AG04450 (cell line): ENCODE measurements at regions of chr20 and their contacts with region 1.

Region 1: DNA sequence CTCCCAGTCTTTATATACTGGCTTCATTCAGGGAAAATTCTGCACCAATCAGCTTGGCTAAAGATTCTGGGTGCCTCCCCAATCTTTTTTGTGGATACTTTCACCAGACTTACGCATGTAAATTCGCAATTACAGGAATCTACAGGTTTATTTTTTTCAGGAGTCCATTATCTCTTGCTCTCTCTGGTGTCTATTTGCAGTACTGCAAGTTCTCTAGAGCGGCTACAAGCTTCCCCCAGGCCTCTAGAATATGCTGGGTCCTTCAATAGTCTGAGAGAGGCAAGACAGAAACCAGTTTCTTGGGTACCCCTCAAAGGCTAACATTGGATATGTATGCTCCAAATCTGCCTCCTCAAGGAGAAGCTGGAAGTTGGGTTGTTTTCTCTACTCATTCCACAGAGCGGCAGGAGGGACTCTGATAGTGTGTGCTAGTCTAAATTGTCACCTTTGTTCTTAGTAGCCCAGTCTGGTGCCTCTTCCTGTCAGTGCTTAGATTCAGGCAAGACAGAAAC is 58.5 kb downstream of the SUN5 start:
- DNase-seq: peak; percentile 3
- H3K4me3 ChIP-seq: no peak overlapping the region
- H3K27ac ChIP-seq: no peak overlapping the region
- H3K27me3 ChIP-seq: peaks cover 14% of the 10 kb centered on the region
- CTCF ChIP-seq: peak; percentile 72

Region 2: DNA sequence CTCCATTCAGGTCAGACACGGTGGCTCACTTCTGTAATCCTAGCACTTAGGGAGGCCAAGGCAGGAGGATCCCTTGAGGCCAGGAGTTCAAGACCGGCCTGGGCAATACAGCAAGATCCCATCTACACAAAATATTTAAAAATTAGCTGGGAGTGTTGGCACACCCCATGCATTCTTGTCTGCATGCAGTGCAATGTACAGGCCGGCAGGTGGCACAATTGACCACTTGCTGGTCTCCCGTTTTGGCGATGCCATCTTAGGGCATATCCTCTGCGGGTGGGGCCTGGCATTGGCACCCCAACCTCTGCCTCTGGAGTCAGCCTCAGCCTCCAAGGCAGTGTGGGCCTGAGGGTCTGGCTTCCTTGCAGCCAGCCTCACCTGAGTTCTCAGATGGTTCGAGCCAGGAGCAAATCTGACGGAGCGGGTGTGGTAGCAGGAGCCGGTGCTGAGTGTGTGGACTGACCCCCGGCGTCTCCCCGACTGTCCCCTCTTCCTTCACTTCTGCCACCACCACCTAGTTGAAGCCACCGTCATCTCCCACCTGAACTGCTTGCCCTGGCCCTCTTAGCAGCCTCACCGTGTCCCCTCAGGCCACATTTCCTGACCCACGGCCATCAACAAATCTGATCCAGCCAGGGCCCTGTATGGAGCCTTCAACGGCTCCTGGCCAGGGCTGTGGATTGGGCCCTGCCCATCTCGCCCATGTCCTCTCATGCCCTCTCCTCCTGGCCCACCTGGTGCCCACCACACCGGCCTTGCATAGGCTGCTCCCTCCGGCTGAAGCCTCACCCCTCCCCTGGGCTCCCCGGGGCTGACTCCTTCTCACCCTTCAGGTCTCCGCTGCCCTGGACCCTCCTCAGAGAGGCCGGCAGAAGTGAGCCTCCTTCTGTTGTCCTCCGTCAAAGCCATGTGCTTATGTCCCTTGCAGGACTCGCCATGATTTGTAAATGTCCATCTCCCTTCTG is 43.0 kb before region 1 on chr20:
- CTCF ChIA-PET with region 1: interaction called, 38 read pairs
- POLR2A ChIA-PET with region 1: no interaction called
- DNase-seq: no peak
- H3K4me3 ChIP-seq: no peak overlapping the region
- H3K27ac ChIP-seq: no peak overlapping the region
- H3K27me3 ChIP-seq: peaks cover 2% of the 10 kb centered on the region
- CTCF ChIP-seq: peak; percentile 92

Region 3: DNA sequence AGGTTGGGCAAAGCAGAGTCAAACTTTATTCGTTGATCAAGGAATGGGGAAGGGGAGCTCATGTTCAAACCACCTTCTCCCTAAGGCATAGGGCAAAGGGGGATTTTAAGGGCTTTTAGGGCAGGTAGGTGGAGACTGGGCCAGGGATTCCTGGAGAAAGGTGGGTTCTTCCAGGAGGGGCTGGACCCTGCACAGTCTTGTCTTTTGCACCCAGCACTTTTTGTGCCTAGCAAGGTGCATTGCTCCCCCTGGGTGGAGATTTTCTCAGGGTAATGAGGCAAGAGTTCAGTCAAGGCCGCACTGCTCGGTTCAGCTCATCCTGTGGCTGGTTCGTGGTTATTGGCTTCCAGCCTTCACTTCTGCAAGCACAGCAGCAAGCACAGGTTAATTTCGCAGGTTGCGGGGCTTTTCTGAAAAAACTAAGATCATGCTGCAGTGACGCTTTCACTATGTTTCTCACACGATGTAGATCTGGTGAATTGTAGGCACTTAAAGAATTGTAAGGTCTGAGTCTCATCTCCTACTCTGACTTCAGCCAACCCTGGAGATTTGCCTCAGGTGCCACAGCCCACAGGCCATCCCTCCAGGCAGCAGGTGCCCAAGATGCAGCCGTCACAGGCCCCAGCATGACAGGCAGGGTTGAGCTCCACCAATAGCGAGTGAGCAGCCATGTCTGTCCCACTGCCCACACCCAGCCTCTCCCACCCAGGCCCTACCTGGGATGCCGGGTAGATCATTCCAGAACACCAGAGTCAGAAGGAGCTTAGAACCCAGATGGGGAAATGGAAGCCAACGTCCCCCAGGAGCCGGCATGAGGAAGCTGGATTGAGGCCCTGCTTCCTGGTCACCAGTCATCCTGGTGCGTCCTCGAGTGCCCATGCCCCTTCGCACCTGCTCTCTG is 21.4 kb after region 1 on chr20:
- CTCF ChIA-PET with region 1: no interaction called
- POLR2A ChIA-PET with region 1: no interaction called
- DNase-seq: no peak
- H3K4me3 ChIP-seq: no peak overlapping the region
- H3K27ac ChIP-seq: no peak overlapping the region
- H3K27me3 ChIP-seq: peaks cover 17% of the 10 kb centered on the region
- CTCF ChIP-seq: no peak

Region 4: DNA sequence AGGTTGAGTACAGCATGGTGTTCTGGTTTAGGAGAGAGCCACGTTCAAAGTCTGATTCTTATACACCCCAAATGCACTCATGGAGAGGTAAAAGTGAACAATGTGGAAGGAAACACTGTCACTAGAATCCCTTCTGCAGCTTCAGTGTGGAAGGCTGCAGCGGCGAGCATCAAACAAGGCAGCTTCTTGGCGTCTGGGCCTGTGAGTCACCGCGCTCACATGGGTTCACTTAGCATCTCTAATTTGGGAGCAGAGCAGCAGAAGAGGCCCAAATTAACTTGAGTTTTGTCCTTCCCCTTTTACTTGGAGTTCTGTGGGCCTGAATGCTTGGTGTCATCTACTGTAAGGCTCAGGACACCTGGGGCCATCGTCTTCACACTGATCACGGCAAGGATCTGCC is 751.4 kb after region 1 on chr20:
- CTCF ChIA-PET with region 1: no interaction called
- POLR2A ChIA-PET with region 1: no interaction called
- DNase-seq: no peak
- H3K4me3 ChIP-seq: no peak overlapping the region
- H3K27ac ChIP-seq: no peak overlapping the region
- H3K27me3 ChIP-seq: no peaks in the 10 kb centered on the region
- CTCF ChIP-seq: no peak